IMR-90 (cell line): ENCODE measurements at regions of chr1 and their contacts with region 1.

Region 1: GRCh38 chr1:207240325-207241095 is 81.0 kb upstream of the CD55 start:
- DNase-seq: peak; percentile 38
- ATAC-seq: 0 out of 2 replicates have a peak, but pooled peaks have one; percentile 18
- H3K4me3 ChIP-seq: no peak overlapping the region
- H3K27ac ChIP-seq: no peak overlapping the region; the same call in 1 of the 2 replicates
- H3K4me1 ChIP-seq: peaks cover 16% of the 10 kb centered on the region
- H3K27me3 ChIP-seq: no peaks in the 10 kb centered on the region
- CTCF ChIP-seq: no peak
- POLR2A ChIP-seq: no peak
- RAD21 ChIP-seq: no peak

Region 2: DNA sequence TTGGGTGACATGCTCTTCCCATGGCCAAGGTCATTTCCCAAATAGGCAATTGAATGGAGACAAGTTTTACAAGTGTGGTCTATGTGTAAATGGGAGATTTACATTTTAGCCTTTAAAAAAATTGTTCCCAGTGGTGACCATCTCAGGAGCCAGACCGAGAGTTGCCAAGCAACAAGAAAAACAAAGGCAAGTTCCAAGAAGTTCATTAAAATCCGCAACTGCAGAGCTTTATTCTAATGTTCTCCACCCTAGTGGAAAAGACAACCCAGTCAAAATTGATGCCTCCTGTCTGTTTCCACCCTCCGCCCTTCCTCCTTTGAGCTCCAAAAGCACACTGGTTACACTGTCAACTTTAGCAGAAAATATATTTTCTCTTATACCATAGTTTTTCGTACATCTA is 47.8 kb after region 1 on chr1:
- CTCF ChIA-PET with region 1: no interaction called
- POLR2A ChIA-PET with region 1: no interaction called
- dilution Hi-C with region 1: no loop called
- in situ Hi-C with region 1: no loop called
- intact Hi-C with region 1: loop called (anchors 5 kb)
- DNase-seq: no peak
- ATAC-seq: no peak
- H3K4me3 ChIP-seq: no peak overlapping the region
- H3K27ac ChIP-seq: no peak overlapping the region
- H3K4me1 ChIP-seq: peaks cover 4% of the 10 kb centered on the region
- H3K27me3 ChIP-seq: no peaks in the 10 kb centered on the region; the same call in 1 of the 2 replicates
- CTCF ChIP-seq: no peak
- POLR2A ChIP-seq: no peak
- RAD21 ChIP-seq: no peak

Region 3: GRCh38 chr1:207309775-207310273 is 69.3 kb after region 1 on chr1:
- CTCF ChIA-PET with region 1: no interaction called
- POLR2A ChIA-PET with region 1: no interaction called
- dilution Hi-C with region 1: no loop called
- in situ Hi-C with region 1: no loop called
- intact Hi-C with region 1: loop called (anchors 5 kb)
- DNase-seq: peak; percentile 70
- ATAC-seq: peak; percentile 87
- H3K4me3 ChIP-seq: no peak overlapping the region
- H3K27ac ChIP-seq: no peak overlapping the region
- H3K4me1 ChIP-seq: no peaks in the 10 kb centered on the region; the same call in 1 of the 2 replicates
- H3K27me3 ChIP-seq: no peaks in the 10 kb centered on the region
- CTCF ChIP-seq: no peak
- POLR2A ChIP-seq: no peak
- RAD21 ChIP-seq: no peak

Region 4: DNA sequence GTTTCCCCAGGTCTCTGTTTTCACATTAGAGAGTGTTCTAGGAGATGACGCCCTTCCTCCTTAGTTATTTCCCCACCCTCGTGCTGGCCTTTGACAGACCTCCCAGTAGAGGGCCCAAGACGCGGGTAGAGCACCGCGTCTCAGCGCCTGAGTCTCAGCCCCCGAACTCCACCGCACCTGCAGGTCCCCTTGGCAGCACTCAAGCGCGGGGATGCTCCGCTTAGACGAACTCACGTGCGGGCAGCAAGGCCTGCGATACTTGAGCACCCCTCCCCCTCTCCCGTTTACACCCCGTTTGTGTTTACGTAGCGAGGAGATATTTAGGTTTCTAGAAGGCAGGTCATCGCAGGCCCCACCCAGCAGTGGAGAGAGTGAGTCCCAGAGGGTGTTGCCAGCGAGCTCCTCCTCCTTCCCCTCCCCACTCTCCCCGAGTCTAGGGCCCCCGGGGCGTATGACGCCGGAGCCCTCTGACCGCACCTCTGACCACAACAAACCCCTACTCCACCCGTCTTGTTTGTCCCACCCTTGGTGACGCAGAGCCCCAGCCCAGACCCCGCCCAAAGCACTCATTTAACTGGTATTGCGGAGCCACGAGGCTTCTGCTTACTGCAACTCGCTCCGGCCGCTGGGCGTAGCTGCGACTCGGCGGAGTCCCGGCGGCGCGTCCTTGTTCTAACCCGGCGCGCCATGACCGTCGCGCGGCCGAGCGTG is 80.7 kb after region 1 on chr1 and contains the start of gene CD55:
- CTCF ChIA-PET with region 1: no interaction called
- POLR2A ChIA-PET with region 1: no interaction called
- dilution Hi-C with region 1: no loop called
- in situ Hi-C with region 1: no loop called
- intact Hi-C with region 1: loop called (anchors 2 kb)
- DNase-seq: peak; percentile 86
- ATAC-seq: peak; percentile 93
- H3K4me3 ChIP-seq: peak within 1 kb of the TSS; percentile 63
- H3K27ac ChIP-seq: peak within 1 kb of the TSS; percentile 28; the same call in 1 of the 2 replicates
- H3K4me1 ChIP-seq: peaks cover 2% of the 10 kb centered on the region; the same call in 1 of the 2 replicates
- H3K27me3 ChIP-seq: no peaks in the 10 kb centered on the region
- CTCF ChIP-seq: no peak; the same call in 1 of the 2 replicates
- POLR2A ChIP-seq: peak; percentile 90
- RAD21 ChIP-seq: no peak
- total RNA-seq, gene CD55: 6.6 and 9.7 TPM in 2 replicates

Region 5: DNA sequence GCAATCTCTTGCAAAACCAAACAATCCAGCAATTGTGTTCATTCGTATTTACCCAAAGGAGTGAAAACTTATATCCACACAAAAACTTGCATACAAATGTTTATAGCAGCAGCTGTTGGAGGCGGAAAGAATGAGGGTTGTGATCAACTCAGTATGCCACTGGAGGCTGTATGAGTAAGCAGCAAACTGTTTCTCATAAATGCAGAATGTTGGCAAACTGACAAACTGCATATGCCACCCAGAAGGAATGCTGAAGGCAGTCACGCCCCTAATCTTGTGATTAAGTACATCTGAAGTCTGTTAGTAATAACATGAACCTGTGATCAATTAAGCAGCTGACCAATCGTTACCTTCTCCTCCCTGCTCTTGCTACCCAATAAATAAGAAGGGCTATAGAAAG is 153.1 kb after region 1 on chr1:
- CTCF ChIA-PET with region 1: no interaction called
- POLR2A ChIA-PET with region 1: no interaction called
- dilution Hi-C with region 1: no loop called
- in situ Hi-C with region 1: no loop called
- intact Hi-C with region 1: loop called (anchors 5 kb)
- DNase-seq: peak; percentile 91
- ATAC-seq: peak; percentile 85
- H3K4me3 ChIP-seq: no peak overlapping the region
- H3K27ac ChIP-seq: no peak overlapping the region
- H3K4me1 ChIP-seq: peaks cover 2% of the 10 kb centered on the region; the same call in 1 of the 2 replicates
- H3K27me3 ChIP-seq: no peaks in the 10 kb centered on the region
- CTCF ChIP-seq: no peak
- POLR2A ChIP-seq: no peak
- RAD21 ChIP-seq: no peak